Keratinocyte (primary cell): ENCODE measurements at regions of chr9 and their contacts with region 1.

Region 1: GRCh38 chr9:124392871-124393460 is 22.3 kb downstream of the PSMB7 start:
- DNase-seq: peak; percentile 81
- H3K4me3 ChIP-seq: no peak overlapping the region
- H3K27ac ChIP-seq: peak overlapping the region; percentile 56
- H3K4me1 ChIP-seq: peaks cover 33% of the 10 kb centered on the region
- H3K27me3 ChIP-seq: no peaks in the 10 kb centered on the region
- CTCF ChIP-seq: peak; percentile 59 to 68 (median 62)

Region 2: DNA sequence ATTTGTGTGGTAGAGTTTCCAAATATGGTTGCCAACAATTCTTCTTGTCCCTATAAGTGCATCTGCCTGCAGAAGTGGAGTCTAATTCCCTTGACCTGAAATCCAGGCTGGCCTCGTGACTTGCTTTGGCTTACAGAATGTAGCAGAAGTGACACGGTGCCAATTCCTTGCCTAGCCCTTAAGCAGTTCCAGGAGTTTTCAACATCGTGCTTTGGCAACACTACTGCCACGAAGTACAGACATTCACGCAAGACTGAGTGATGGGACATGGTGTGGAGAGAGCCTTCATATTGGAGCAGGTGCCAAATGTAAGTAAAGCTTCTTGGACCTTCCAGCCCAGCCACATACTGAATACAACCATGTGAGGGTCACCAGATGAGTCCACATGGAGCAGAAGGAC is 228.2 kb before region 1 on chr9:
- dilution Hi-C with region 1: no loop called
- DNase-seq: no peak
- H3K4me3 ChIP-seq: no peak overlapping the region
- H3K27ac ChIP-seq: no peak overlapping the region
- H3K4me1 ChIP-seq: no peaks in the 10 kb centered on the region
- H3K27me3 ChIP-seq: peaks cover 27% of the 10 kb centered on the region
- CTCF ChIP-seq: no peak

Region 3: GRCh38 chr9:124257844-124258606 is 134.9 kb before region 1 on chr9 and contains the start of gene NEK6:
- dilution Hi-C with region 1: no loop called
- DNase-seq: no peak
- H3K4me3 ChIP-seq: peak within 1 kb of the TSS; percentile 76 to 84 (median 78)
- H3K27ac ChIP-seq: peak within 1 kb of the TSS; percentile 73
- H3K4me1 ChIP-seq: peaks cover 31% of the 10 kb centered on the region
- H3K27me3 ChIP-seq: no peaks in the 10 kb centered on the region
- CTCF ChIP-seq: peak in 1 of 3 experiments; percentile 1
- polyA plus RNA-seq, gene NEK6: 43.5 to 62.3 TPM (median 56.4 TPM) in 3 replicates

Region 4: GRCh38 chr9:124527781-124528180 is 134.8 kb after region 1 on chr9:
- dilution Hi-C with region 1: loop called (anchors 25 kb)
- DNase-seq: no peak
- H3K4me3 ChIP-seq: no peak overlapping the region
- H3K27ac ChIP-seq: no peak overlapping the region
- H3K4me1 ChIP-seq: no peaks in the 10 kb centered on the region
- H3K27me3 ChIP-seq: no peaks in the 10 kb centered on the region
- CTCF ChIP-seq: no peak